Activated T-helper 2 cell treated with anti-CD3 and anti-CD28 coated beads, Interferon-gamma antibody, Interleukin-2, Interleukin-4, amounts not matched to agents 10 μg/mL and 5 μg/mL and 100 μg/mL, durations not matched to agents 14 hours and 24 hours and 36 hours (primary cell): ENCODE measurements at regions of chr16 and their contacts with region 1.

Region 1: GRCh38 chr16:4734063-4734729 is at the starts of genes ANKS3 and DNAAF8:
- DNase-seq: peak; percentile 76
- H3K4me3 Mint-ChIP-seq: peak within 1 kb of the TSS; percentile 85
- H3K27ac Mint-ChIP-seq: peak within 1 kb of the TSS; percentile 69
- H3K4me1 Mint-ChIP-seq: peaks cover 12% of the 10 kb centered on the region
- H3K27me3 Mint-ChIP-seq: no peaks in the 10 kb centered on the region
- total RNA-seq, gene ANKS3: 18.6 and 20.6 TPM in 2 replicates
- total RNA-seq, gene DNAAF8: 0.11 TPM in 1 of 2 replicates, not detected in the other

Region 2: GRCh38 chr16:4271176-4272066 is 462.8 kb before region 1 on chr16:
- intact Hi-C with region 1: no loop called
- DNase-seq: peak; percentile 87
- H3K4me3 Mint-ChIP-seq: peak overlapping the region; percentile 83
- H3K27ac Mint-ChIP-seq: peak overlapping the region; percentile 90
- H3K4me1 Mint-ChIP-seq: peaks cover 6% of the 10 kb centered on the region
- H3K27me3 Mint-ChIP-seq: no peaks in the 10 kb centered on the region

Region 3: DNA sequence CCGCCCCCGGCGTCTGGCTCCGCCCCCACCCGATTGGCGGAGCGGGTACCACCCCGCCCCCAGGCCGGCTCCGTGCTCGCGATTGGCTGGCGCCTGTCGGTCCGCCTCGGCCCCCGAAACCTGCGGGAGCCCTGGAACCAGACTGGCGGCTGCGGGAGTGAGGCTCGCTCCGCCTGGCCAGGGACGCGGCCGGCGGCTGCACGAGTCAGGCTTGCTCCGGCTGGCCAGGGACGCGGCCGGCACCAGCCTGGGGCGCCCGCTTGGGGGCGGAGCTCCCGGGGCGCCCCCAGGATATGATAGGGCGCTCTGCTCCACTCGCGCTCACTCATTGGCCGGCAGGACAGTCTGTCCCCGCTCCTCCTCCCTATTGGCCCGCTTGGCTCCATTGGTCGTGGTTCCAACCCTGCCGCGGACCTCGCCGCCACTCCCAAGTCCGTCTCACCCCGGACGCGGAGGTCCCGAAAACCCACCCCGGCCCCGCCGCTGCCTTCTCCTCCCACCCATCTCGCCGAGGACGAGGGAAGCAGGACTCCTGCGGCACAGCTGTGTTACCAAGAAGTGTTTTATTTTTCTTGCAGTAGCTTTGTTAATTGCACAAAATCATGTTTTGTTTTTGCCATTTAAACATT is 68.6 kb after region 1 on chr16:
- intact Hi-C with region 1: loop called (anchors 2 kb)
- DNase-seq: peak; percentile 88
- H3K4me3 Mint-ChIP-seq: peak overlapping the region; percentile 81
- H3K27ac Mint-ChIP-seq: peak overlapping the region; percentile 38
- H3K4me1 Mint-ChIP-seq: peaks cover 5% of the 10 kb centered on the region
- H3K27me3 Mint-ChIP-seq: no peaks in the 10 kb centered on the region

Region 4: DNA sequence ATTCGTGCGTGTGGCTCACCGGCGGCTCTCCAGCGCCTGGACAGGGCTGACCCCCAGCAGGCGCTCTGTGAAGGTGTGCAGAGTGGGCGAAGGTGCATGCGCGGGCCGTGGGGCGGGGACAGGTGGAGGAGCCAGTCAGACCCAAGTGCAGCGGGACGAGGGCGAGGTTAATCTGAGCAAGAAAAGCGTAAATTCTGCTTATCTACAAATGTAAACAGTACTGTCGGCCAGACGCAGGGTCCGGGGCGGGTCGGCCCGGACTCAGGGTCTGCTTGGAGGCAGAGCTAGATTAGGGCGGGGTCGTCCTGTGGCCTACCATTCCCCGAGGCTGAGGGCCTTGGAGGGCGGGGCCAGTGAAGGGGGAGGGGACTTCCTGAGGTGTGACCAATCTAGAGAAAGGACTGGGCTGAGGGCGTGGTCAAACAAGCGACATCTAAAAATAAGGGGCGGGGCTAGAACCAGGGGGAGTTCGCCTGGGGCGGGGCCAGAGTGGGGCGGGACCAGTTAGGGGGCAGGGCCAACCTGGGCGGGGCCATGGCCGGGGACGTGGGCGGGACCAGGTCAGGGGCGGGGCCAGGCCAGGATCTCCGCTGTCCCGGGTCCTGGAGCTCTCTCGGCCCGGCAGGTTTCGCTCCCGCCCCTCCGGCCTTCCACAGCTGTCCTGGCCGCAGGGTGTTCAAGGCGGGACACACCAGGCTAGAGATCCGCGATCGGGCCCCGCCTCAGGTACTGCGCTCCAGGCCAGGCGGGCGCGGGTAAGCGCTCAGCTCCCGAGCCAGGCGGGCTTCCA is 223.7 kb after region 1 on chr16 and contains the start of gene SEC14L5:
- intact Hi-C with region 1: loop called (anchors 10 kb)
- DNase-seq: peak; percentile 89
- H3K4me3 Mint-ChIP-seq: peak within 1 kb of the TSS; percentile 82
- H3K27ac Mint-ChIP-seq: no peak within 1 kb of the TSS
- H3K4me1 Mint-ChIP-seq: peaks cover 13% of the 10 kb centered on the region
- H3K27me3 Mint-ChIP-seq: peaks cover 13% of the 10 kb centered on the region
- total RNA-seq, gene SEC14L5: not detected in 2 replicates